CD4-positive, alpha-beta memory T cell (primary cell): ENCODE measurements at regions of chr7 and their contacts with region 1.

Region 1: DNA sequence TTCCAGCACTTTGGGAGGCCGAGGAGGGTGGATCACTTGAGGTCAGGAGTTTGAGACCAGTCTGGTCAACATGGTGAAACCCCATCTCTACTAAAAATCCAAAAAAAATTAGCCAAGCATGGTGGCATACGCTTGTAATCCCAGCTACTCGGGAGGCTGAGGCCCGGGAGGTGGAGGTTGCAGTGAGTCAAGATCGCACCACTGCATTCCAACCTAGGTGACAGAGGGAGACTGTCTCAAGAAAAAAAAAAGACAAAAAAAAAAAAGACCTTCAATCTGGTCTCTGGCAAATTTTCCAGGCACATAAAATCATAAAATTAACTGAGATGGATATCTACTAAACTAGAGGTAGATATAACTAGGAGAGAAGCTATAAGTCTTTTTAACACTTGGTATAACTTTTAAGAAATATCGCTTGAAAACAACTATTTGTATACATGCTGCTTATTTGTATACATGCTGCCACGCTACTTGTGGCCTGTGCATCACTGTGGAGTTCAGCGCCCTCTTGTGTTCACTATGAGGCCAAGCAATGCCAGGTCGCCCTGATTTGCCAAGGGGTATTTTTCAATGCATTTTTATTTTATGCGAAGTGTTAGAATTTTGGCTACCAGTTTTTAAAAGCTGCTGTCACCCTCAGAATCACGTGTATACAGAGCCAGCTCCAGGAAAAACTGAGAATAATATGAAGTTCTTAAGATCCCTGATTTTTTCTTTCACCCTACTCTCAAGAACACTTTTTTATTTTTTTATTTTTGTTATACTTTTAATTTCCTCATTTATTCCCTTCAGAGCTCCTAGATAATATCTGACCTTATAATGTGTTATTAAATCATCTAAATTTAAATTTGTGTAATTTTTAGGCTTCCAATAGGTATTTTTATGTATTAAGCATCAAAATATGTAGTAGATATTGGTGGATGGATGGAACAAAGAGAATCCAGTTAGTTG is 26.7 kb downstream of the CYCS start:
- DNase-seq: peak; percentile 50 to 65 (median 62)
- H3K4me3 ChIP-seq: no peak overlapping the region
- H3K4me3 Mint-ChIP-seq: no peak overlapping the region
- H3K27ac ChIP-seq: no peak overlapping the region
- H3K27ac Mint-ChIP-seq: no peak overlapping the region
- H3K4me1 ChIP-seq: peaks cover 3% of the 10 kb centered on the region
- H3K4me1 Mint-ChIP-seq: peaks cover 6 to 10% (median 7%) of the 10 kb centered on the region in 4 donors
- H3K27me3 ChIP-seq: no peaks in the 10 kb centered on the region
- H3K27me3 Mint-ChIP-seq: peaks cover 0 to 3% of the 10 kb centered on the region in 2 donors

Region 2: GRCh38 chr7:23570592-23571200 is 1527.7 kb before region 1 on chr7:
- CTCF ChIA-PET with region 1: interaction called, 9 read pairs
- POLR2A ChIA-PET with region 1: no interaction called
- intact Hi-C with region 1: loop called (anchors 1 kb)
- DNase-seq: peak; percentile 44 to 65 (median 57)
- H3K4me3 ChIP-seq: no peak overlapping the region
- H3K4me3 Mint-ChIP-seq: peak overlapping the region in 2 of 8 donors; percentile 3 to 25
- H3K27ac ChIP-seq: no peak overlapping the region
- H3K27ac Mint-ChIP-seq: peak overlapping the region in 1 of 7 donors; percentile 5
- H3K4me1 ChIP-seq: no peaks in the 10 kb centered on the region
- H3K4me1 Mint-ChIP-seq: peaks cover 0 to 3% (median under 1%) of the 10 kb centered on the region in 4 donors
- H3K27me3 ChIP-seq: no peaks in the 10 kb centered on the region
- H3K27me3 Mint-ChIP-seq: peaks cover 10 to 14% of the 10 kb centered on the region in 2 donors

Region 3: GRCh38 chr7:24800667-24801066 is 297.7 kb before region 1 on chr7:
- CTCF ChIA-PET with region 1: interaction called, 414 read pairs
- POLR2A ChIA-PET with region 1: no interaction called
- intact Hi-C with region 1: no loop called
- DNase-seq: no peak
- H3K4me3 ChIP-seq: no peak overlapping the region
- H3K4me3 Mint-ChIP-seq: peak overlapping the region in 1 of 8 donors; percentile 40
- H3K27ac ChIP-seq: no peak overlapping the region
- H3K27ac Mint-ChIP-seq: peak overlapping the region in 1 of 7 donors; percentile 13
- H3K4me1 ChIP-seq: peaks cover 4% of the 10 kb centered on the region
- H3K4me1 Mint-ChIP-seq: peaks cover 7 to 12% (median 8%) of the 10 kb centered on the region in 4 donors
- H3K27me3 ChIP-seq: no peaks in the 10 kb centered on the region
- H3K27me3 Mint-ChIP-seq: no peaks in the 10 kb centered on the region

Region 4: DNA sequence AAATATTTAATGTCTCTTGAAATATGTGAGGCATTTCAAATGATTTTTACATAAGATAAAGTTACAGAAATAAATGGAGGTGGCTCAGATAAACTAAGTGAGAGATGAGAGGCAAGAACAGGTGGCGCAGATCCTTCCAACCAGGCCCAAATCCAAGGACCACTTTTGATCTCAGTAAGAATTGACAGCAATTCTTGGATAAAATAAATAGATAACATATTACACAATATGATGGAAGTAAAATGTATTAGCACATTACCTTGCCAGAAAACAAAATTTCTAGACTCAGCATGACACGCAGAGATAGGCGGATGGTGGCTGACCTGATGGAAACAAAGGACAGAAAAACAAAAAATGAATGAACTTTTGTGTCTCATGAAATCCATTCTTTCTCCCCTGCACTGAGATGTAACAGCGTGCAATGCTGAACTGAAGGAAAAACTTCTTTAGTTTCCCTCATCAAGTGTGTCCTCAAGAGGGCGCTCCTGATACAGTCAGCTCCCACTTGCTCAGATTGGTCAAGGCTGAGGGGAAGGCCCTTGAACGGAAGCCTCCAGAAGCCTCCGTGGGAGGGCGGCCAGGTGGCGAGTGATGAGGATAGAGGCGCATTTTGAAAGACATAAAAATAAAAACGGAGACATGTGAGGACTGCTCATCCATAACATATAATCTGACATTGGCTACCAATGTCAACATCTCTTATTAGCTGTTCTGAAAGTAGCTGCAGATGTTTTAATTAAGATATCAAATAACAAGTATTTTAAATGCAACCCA is 278.3 kb before region 1 on chr7:
- CTCF ChIA-PET with region 1: interaction called, 414 read pairs
- POLR2A ChIA-PET with region 1: interaction called, 31 read pairs
- intact Hi-C with region 1: loop called (anchors 1 kb)
- DNase-seq: peak; percentile 70 to 81 (median 74)
- H3K4me3 ChIP-seq: peak overlapping the region in 1 of 2 donors; percentile 23
- H3K4me3 Mint-ChIP-seq: peak overlapping the region; percentile 78 to 90 (median 84)
- H3K27ac ChIP-seq: peak overlapping the region; percentile 78
- H3K27ac Mint-ChIP-seq: peak overlapping the region; percentile 88 to 100 (median 98)
- H3K4me1 ChIP-seq: peaks cover 42% of the 10 kb centered on the region
- H3K4me1 Mint-ChIP-seq: peaks cover 29 to 55% (median 42%) of the 10 kb centered on the region in 4 donors
- H3K27me3 ChIP-seq: no peaks in the 10 kb centered on the region
- H3K27me3 Mint-ChIP-seq: no peaks in the 10 kb centered on the region

Region 5: GRCh38 chr7:24882989-24883621 is 215.3 kb before region 1 on chr7:
- CTCF ChIA-PET with region 1: interaction called, 11 read pairs
- POLR2A ChIA-PET with region 1: no interaction called
- intact Hi-C with region 1: no loop called
- DNase-seq: no peak
- H3K4me3 ChIP-seq: no peak overlapping the region
- H3K4me3 Mint-ChIP-seq: peak overlapping the region in 1 of 8 donors; percentile 24
- H3K27ac ChIP-seq: no peak overlapping the region
- H3K27ac Mint-ChIP-seq: peak overlapping the region in 5 of 7 donors; percentile 29 to 79 (median 66)
- H3K4me1 ChIP-seq: peaks cover 19% of the 10 kb centered on the region
- H3K4me1 Mint-ChIP-seq: peaks cover 14 to 49% (median 34%) of the 10 kb centered on the region in 4 donors
- H3K27me3 ChIP-seq: no peaks in the 10 kb centered on the region
- H3K27me3 Mint-ChIP-seq: no peaks in the 10 kb centered on the region

Region 6: GRCh38 chr7:25083201-25083600 is 15.2 kb before region 1 on chr7:
- CTCF ChIA-PET with region 1: interaction called, 32 read pairs
- POLR2A ChIA-PET with region 1: no interaction called
- intact Hi-C with region 1: no loop called
- DNase-seq: no peak
- H3K4me3 ChIP-seq: no peak overlapping the region
- H3K4me3 Mint-ChIP-seq: no peak overlapping the region
- H3K27ac ChIP-seq: no peak overlapping the region
- H3K27ac Mint-ChIP-seq: no peak overlapping the region
- H3K4me1 ChIP-seq: no peaks in the 10 kb centered on the region
- H3K4me1 Mint-ChIP-seq: no peaks in the 10 kb centered on the region
- H3K27me3 ChIP-seq: no peaks in the 10 kb centered on the region
- H3K27me3 Mint-ChIP-seq: peaks cover 4% of the 10 kb centered on the region in 2 donors

Region 7: DNA sequence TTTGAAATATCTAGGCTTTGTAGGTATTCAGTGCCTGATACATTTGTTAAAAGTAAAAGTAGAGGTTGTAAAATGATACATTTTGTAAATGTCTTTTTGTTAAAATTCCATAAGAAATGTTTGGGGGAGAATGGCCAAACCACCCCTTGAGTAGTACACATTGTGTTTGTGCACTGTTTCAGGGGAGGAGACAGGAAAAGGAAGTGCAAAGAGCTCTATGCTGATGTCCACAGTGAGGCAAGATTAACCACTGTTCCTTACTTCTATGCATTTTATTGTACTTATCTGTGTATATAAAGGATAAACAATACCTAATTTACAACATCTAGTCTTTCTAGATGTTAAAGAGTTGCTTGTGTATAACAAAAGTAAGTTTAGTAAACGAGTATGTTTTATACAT is 34.1 kb after region 1 on chr7:
- CTCF ChIA-PET with region 1: interaction called, 11 read pairs
- POLR2A ChIA-PET with region 1: interaction called, 3 read pairs
- intact Hi-C with region 1: no loop called
- DNase-seq: no peak
- H3K4me3 ChIP-seq: no peak overlapping the region
- H3K4me3 Mint-ChIP-seq: peak overlapping the region in 1 of 8 donors; percentile 21
- H3K27ac ChIP-seq: no peak overlapping the region
- H3K27ac Mint-ChIP-seq: peak overlapping the region in 2 of 7 donors; percentile 9 to 43
- H3K4me1 ChIP-seq: peaks cover 8% of the 10 kb centered on the region
- H3K4me1 Mint-ChIP-seq: peaks cover 8 to 16% (median 11%) of the 10 kb centered on the region in 4 donors
- H3K27me3 ChIP-seq: no peaks in the 10 kb centered on the region
- H3K27me3 Mint-ChIP-seq: no peaks in the 10 kb centered on the region

Region 8: GRCh38 chr7:25187932-25188331 is 89.6 kb after region 1 on chr7:
- CTCF ChIA-PET with region 1: no interaction called
- POLR2A ChIA-PET with region 1: no interaction called
- intact Hi-C with region 1: no loop called
- DNase-seq: no peak
- H3K4me3 ChIP-seq: no peak overlapping the region
- H3K4me3 Mint-ChIP-seq: no peak overlapping the region
- H3K27ac ChIP-seq: no peak overlapping the region
- H3K27ac Mint-ChIP-seq: peak overlapping the region in 1 of 7 donors; percentile 42
- H3K4me1 ChIP-seq: no peaks in the 10 kb centered on the region
- H3K4me1 Mint-ChIP-seq: no peaks in the 10 kb centered on the region
- H3K27me3 ChIP-seq: no peaks in the 10 kb centered on the region
- H3K27me3 Mint-ChIP-seq: peaks cover 13 to 16% of the 10 kb centered on the region in 2 donors